ENCODE measurements at regions of chr1 and their contacts with region 1.

Region 1: GRCh38 chr1:19485362-19486187 is at the start of gene CAPZB:
- DNase-seq: peak; percentile 75
- ATAC-seq: peak; percentile 76
- H3K4me3 ChIP-seq: peak within 1 kb of the TSS; percentile 84 to 100 (median 99)
- H3K27ac ChIP-seq: peak within 1 kb of the TSS; percentile 93
- H3K4me1 ChIP-seq: peaks cover 61% of the 10 kb centered on the region
- H3K27me3 ChIP-seq: no peaks in the 10 kb centered on the region; a peak in 1 of 5 replicates
- CTCF ChIP-seq: no peak
- EP300 ChIP-seq: no peak
- POLR2A ChIP-seq: peak; percentile 80 to 84
- RAD21 ChIP-seq: peak; percentile 70
- total RNA-seq, gene CAPZB: 58.9 and 84.1 TPM in 2 replicates

Region 2: DNA sequence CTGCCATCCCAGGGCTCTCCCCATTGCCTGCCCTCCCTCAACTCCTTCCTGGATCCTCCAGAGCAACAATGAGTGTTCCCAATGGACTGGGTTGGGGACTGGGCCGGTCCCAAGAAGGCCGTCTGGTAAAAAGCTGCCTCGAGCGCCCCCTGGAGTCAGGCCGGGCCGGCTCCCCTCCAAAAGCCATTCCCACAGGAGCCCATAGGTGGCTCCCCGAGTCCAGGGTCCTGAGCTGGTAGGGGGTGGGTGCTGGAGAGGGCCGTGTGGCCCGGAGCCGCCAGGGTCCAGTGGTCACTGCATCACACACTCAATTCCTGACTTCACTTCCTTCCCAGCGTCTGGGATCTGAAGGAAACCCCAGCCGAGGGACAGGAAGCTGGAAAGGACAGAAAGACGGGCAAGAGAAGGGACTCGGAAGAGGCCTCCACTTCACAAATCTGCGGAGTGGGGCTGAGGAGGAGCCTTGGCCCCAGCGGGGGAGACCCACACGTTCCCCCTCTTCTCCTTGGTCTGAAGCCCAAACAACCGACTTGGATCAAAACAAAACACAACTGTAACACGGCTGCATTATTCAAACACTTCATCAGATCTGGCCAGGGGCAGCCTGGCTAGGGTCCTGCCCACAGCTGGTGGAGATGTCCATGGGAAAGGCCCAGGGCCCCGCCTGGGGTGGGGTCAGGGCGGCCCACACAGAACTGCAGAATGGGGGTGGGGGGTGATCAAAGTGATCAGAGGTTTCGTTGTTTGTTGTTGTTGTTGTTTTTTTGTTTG is 572.3 kb before region 1 on chr1:
- CTCF ChIA-PET with region 1: no interaction called
- POLR2A ChIA-PET with region 1: no interaction called
- in situ Hi-C with region 1: no loop called
- intact Hi-C with region 1: no loop called
- DNase-seq: peak; percentile 66
- ATAC-seq: peak; percentile 97
- H3K4me3 ChIP-seq: no peak overlapping the region
- H3K27ac ChIP-seq: no peak overlapping the region
- H3K4me1 ChIP-seq: peaks cover 13% of the 10 kb centered on the region
- H3K27me3 ChIP-seq: no peaks in the 10 kb centered on the region
- CTCF ChIP-seq: peak; percentile 100
- EP300 ChIP-seq: no peak
- POLR2A ChIP-seq: no peak
- RAD21 ChIP-seq: peak; percentile 98

Region 3: GRCh38 chr1:19410393-19410792 is 75.2 kb before region 1 on chr1:
- CTCF ChIA-PET with region 1: no interaction called
- POLR2A ChIA-PET with region 1: interaction called, 11 read pairs
- in situ Hi-C with region 1: no loop called
- intact Hi-C with region 1: no loop called
- DNase-seq: no peak
- ATAC-seq: peak; percentile 89
- H3K4me3 ChIP-seq: peak overlapping the region in 2 of 3 experiments; percentile 7 to 26; a peak in 1 of 6 replicates
- H3K27ac ChIP-seq: peak overlapping the region; percentile 68
- H3K4me1 ChIP-seq: peaks cover 70% of the 10 kb centered on the region
- H3K27me3 ChIP-seq: no peaks in the 10 kb centered on the region
- CTCF ChIP-seq: peak; percentile 33
- EP300 ChIP-seq: no peak
- POLR2A ChIP-seq: no peak
- RAD21 ChIP-seq: peak; percentile 30; the same call in 1 of the 2 replicates

Region 4: DNA sequence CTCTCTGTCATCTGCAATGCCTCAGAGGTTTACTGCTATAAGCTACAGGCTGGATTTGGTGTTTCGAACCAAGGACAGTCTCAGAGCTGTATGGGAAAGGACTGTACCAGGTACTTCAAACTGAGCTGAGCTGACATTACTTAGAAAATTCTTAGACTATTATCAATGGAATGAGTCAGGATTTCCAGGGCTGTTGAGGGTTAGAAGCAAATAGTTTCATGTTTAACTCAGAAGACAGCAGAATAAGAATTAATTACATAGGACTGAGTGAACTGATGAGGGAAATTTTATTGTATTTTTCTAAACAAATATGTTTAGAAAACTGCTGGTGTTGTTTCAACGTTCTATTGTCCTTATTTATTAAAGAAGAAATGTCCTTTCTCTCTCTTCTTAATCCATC is 74.1 kb after region 1 on chr1:
- CTCF ChIA-PET with region 1: no interaction called
- POLR2A ChIA-PET with region 1: no interaction called
- in situ Hi-C with region 1: no loop called
- intact Hi-C with region 1: loop called (anchors 2 kb)
- DNase-seq: no peak
- ATAC-seq: no peak
- H3K4me3 ChIP-seq: no peak overlapping the region
- H3K27ac ChIP-seq: no peak overlapping the region
- H3K4me1 ChIP-seq: peaks cover 15% of the 10 kb centered on the region
- H3K27me3 ChIP-seq: peaks cover 1 to 30% of the 10 kb centered on the region in 2 experiments; a peak in 4 of 5 replicates
- CTCF ChIP-seq: no peak
- EP300 ChIP-seq: no peak
- POLR2A ChIP-seq: no peak
- RAD21 ChIP-seq: no peak

Region 5: GRCh38 chr1:19643602-19644394 is 158.2 kb after region 1 on chr1 and contains the start of gene NBL1:
- CTCF ChIA-PET with region 1: no interaction called
- POLR2A ChIA-PET with region 1: no interaction called
- in situ Hi-C with region 1: loop called (anchors 5 kb)
- intact Hi-C with region 1: no loop called
- DNase-seq: no peak
- ATAC-seq: peak; percentile 8
- H3K4me3 ChIP-seq: peak within 1 kb of the TSS; percentile 68 to 83 (median 75)
- H3K27ac ChIP-seq: no peak within 1 kb of the TSS
- H3K4me1 ChIP-seq: peaks cover 53% of the 10 kb centered on the region
- H3K27me3 ChIP-seq: peaks cover 2 to 21% of the 10 kb centered on the region in 2 experiments; a peak in 3 of 5 replicates
- CTCF ChIP-seq: no peak
- EP300 ChIP-seq: no peak
- POLR2A ChIP-seq: no peak
- RAD21 ChIP-seq: no peak
- total RNA-seq, gene NBL1: 1.9 and 2.7 TPM in 2 replicates

Measured in HepG2 (cell line).